ENCODE measurements at regions of chr17 and their contacts with region 1.

Region 1: GRCh38 chr17:19590912-19591551 is 57.4 kb downstream of the SLC47A1 start:
- DNase-seq: no peak
- H3K4me3 ChIP-seq: no peak overlapping the region
- H3K27ac ChIP-seq: no peak overlapping the region
- H3K4me1 ChIP-seq: no peaks in the 10 kb centered on the region
- H3K27me3 ChIP-seq: no peaks in the 10 kb centered on the region
- CTCF ChIP-seq: no peak

Region 2: GRCh38 chr17:19546289-19547065 is 44.6 kb before region 1 on chr17:
- intact Hi-C with region 1: loop called (anchors 10 kb)
- DNase-seq: peak; percentile 74
- H3K4me3 ChIP-seq: no peak overlapping the region
- H3K27ac ChIP-seq: peak overlapping the region; percentile 9
- H3K4me1 ChIP-seq: peaks cover 8% of the 10 kb centered on the region
- H3K27me3 ChIP-seq: no peaks in the 10 kb centered on the region
- CTCF ChIP-seq: peak; percentile 18

Measured in colonic mucosa (tissue), 4 donors.